Caco-2 (cell line): ENCODE measurements at regions of chr7 and their contacts with region 1.

Region 1: DNA sequence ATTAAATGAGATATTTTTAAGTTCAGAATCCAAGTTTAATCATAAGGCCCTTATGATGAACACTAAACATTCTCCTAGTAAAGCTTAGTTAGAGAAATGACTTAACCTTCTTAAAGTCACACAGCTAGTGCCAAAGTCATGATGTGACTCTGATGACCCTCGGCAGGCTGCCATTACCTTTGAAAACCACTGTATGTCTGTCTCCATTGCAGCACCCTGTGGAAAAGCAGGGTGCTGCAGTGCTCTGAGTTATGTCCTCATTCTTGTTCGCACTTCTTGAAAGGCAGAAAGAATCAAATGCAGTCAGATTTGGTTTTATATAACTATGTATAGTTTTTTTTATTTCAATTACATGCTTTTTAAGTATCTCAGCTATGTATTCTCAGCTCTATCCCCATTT is 105.0 kb downstream of the PHTF2 start:
- DNase-seq: peak; percentile 35 to 44
- H3K4me3 ChIP-seq: no peak overlapping the region
- H3K4me3 Mint-ChIP-seq: no peak overlapping the region
- H3K27ac Mint-ChIP-seq: no peak overlapping the region
- H3K4me1 ChIP-seq: 0 out of 2 replicates have a peak, but pooled peaks cover 4% of the 10 kb centered on the region
- H3K4me1 Mint-ChIP-seq: no peaks in the 10 kb centered on the region
- H3K27me3 ChIP-seq: no peaks in the 10 kb centered on the region
- H3K27me3 Mint-ChIP-seq: no peaks in the 10 kb centered on the region
- CTCF ChIP-seq: peak; percentile 48 to 71

Region 2: DNA sequence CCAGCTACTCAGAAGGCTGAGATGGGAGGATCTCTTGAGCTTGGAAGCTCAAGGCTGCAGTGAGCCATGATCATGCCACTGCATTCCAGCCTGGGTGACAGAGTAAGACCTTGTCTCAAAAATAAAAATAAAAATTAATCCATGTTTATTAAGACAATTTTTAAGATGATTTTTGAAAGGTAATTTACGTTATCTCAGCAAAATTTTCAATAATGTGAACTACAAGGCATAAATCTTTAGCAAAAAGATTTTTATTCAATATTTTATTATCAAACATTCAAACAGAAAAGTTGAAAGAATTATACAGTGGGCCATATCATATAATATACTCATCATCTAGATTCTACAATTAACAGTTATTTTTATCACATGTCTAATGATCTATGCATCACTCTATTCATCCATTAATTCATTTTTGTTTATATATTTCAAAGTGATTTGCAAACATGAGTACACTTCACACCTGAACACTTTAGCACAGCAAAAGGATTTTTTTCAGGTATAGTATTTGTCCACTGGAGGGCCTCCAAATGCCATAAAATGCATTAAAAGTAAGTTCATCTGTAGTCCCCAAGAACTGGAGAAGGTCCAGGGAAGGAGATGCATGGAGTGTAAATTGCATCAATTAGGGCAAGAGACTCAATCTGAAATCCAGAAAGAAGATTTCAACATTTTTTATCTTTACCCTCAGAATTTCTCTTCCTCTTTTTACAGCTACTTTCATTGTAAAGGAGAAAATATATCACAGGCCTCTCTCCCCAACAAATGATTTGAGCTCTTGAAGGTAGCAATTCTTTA is 246.0 kb before region 1 on chr7:
- CTCF ChIA-PET with region 1: no interaction called
- POLR2A ChIA-PET with region 1: no interaction called
- intact Hi-C with region 1: loop called (anchors 1 kb)
- DNase-seq: peak in 1 of 2 experiments; percentile 59
- H3K4me3 ChIP-seq: no peak overlapping the region
- H3K4me3 Mint-ChIP-seq: no peak overlapping the region
- H3K27ac Mint-ChIP-seq: no peak overlapping the region
- H3K4me1 ChIP-seq: peaks cover 10% of the 10 kb centered on the region; the same call in 1 of the 2 replicates
- H3K4me1 Mint-ChIP-seq: peaks cover 18% of the 10 kb centered on the region
- H3K27me3 ChIP-seq: no peaks in the 10 kb centered on the region
- H3K27me3 Mint-ChIP-seq: no peaks in the 10 kb centered on the region
- CTCF ChIP-seq: peak; percentile 64 to 72